ENCODE measurements at regions of chr18 and their contacts with region 1.

Region 1: DNA sequence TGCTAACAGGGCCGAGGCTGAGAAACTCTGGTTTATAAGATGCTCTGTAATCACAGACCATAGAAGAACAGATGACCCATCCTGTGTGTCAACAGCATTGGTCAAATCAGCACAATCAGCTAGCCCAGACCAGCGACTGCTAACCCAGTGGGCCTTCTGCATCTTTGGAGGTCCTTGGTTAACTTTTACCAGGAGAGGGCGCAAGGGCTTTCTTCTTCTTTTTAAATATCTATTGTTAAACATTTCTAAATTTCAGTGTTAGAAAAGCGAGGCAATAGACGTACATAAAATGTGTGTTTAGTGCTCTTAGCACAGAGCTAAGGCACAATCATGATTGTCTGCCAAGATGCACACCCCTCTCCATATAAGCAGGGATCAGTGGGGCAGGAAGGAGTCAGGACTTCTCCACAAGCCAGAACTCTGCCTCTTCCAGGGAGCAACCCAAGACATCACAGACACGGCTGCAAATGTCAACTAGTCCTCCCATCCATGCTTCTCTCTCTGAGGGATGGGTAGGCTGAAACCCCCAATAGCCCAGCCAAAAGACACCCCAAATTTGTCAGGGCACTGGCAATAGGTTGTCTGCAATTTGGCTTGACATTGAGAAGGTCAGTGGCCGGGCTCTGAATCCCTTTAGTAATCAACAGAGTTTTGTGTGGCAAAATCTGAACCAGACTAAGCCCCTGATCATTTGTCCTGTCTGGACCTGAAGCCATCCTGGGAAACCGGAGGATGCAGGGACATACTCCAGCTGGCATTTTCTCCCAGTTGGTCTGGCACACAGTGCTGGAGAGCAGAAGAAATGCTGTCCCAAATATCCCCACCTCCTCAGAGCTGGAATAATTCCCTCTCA is 188.2 kb downstream of the BCL2 start:
- DNase-seq: peak; percentile 32 to 78 (median 63)
- ATAC-seq: peak; percentile 76
- H3K4me3 ChIP-seq: no peak overlapping the region
- H3K4me3 Mint-ChIP-seq: no peak overlapping the region
- H3K27ac ChIP-seq: no peak overlapping the region
- H3K27ac Mint-ChIP-seq: peak overlapping the region; percentile 77
- H3K4me1 ChIP-seq: peaks cover 31% of the 10 kb centered on the region
- H3K4me1 Mint-ChIP-seq: peaks cover 30% of the 10 kb centered on the region
- H3K27me3 ChIP-seq: no peaks in the 10 kb centered on the region
- H3K27me3 Mint-ChIP-seq: no peaks in the 10 kb centered on the region
- CTCF ChIP-seq: peak; percentile 71

Region 2: DNA sequence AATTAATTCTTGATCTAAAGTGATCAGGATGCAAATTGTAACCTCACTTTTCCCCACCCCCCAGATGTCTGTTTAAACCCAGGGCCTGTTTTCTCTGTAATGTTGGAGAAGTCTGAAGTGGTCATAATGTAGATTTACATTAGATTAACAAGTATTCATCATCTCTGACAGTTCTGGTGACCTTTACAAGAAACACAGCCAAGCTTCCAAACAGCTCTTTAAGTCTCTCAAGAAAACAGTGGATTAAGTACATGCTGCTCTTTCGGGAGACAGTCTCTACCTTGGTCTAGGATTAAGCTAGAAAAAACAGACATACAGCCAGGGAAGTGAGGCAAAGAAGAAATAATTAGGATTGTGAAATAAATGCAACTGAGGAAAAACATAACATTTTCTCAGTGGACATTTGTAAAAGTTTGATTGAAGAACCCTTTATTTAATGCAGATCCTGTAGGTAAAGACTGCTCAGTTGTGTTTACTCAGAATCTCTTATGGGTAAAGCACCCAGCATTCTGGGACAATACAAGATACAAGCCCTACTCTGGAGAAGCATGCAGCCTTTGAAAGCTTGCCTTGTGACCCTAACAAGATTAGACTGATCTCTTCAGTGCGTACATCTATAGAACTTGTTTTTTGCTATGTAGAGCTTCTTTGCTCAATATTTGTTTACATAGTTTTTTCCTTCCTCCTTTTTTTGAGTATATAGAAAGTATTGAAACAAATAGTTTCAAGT is 212.1 kb before region 1 on chr18:
- CTCF ChIA-PET with region 1: no interaction called
- POLR2A ChIA-PET with region 1: no interaction called
- intact Hi-C with region 1: no loop called
- DNase-seq: no peak
- ATAC-seq: no peak
- H3K4me3 ChIP-seq: no peak overlapping the region
- H3K4me3 Mint-ChIP-seq: no peak overlapping the region
- H3K27ac ChIP-seq: no peak overlapping the region
- H3K27ac Mint-ChIP-seq: no peak overlapping the region
- H3K4me1 ChIP-seq: no peaks in the 10 kb centered on the region
- H3K4me1 Mint-ChIP-seq: no peaks in the 10 kb centered on the region
- H3K27me3 ChIP-seq: no peaks in the 10 kb centered on the region
- H3K27me3 Mint-ChIP-seq: no peaks in the 10 kb centered on the region
- CTCF ChIP-seq: no peak

Region 3: DNA sequence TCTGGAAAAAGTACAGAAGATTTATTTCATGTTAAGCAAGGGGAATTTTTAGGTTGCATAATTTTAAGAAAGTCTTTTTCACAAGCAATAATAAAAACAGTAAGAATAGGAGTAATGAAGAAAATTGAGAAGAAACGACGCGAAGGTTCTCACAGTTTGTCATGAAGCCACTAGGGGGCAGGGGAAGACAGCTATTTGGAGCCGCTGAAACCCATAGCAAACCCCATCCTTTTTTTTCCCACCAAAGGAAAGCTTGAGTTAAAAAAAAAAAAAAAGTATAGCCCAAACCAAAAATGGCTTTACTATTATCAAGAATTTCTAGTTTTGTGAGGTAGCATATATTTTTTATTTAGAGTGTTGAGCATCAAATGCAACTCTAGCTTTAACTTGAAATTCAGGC is 115.1 kb before region 1 on chr18:
- CTCF ChIA-PET with region 1: interaction called, 30 read pairs
- POLR2A ChIA-PET with region 1: interaction called, 3 read pairs
- intact Hi-C with region 1: loop called (anchors 1 to 2 kb)
- DNase-seq: peak; percentile 11 to 79 (median 51)
- ATAC-seq: peak; percentile 77
- H3K4me3 ChIP-seq: no peak overlapping the region
- H3K4me3 Mint-ChIP-seq: no peak overlapping the region
- H3K27ac ChIP-seq: no peak overlapping the region
- H3K27ac Mint-ChIP-seq: no peak overlapping the region
- H3K4me1 ChIP-seq: no peaks in the 10 kb centered on the region
- H3K4me1 Mint-ChIP-seq: no peaks in the 10 kb centered on the region
- H3K27me3 ChIP-seq: no peaks in the 10 kb centered on the region
- H3K27me3 Mint-ChIP-seq: peaks cover 16% of the 10 kb centered on the region
- CTCF ChIP-seq: peak; percentile 90

Region 4: GRCh38 chr18:63148449-63149301 is 17.3 kb after region 1 on chr18:
- CTCF ChIA-PET with region 1: interaction called, 88 read pairs
- POLR2A ChIA-PET with region 1: interaction called, 5 read pairs
- intact Hi-C with region 1: no loop called
- DNase-seq: no peak
- ATAC-seq: no peak
- H3K4me3 ChIP-seq: no peak overlapping the region
- H3K4me3 Mint-ChIP-seq: no peak overlapping the region
- H3K27ac ChIP-seq: no peak overlapping the region
- H3K27ac Mint-ChIP-seq: no peak overlapping the region
- H3K4me1 ChIP-seq: peaks cover 28% of the 10 kb centered on the region
- H3K4me1 Mint-ChIP-seq: peaks cover 51% of the 10 kb centered on the region
- H3K27me3 ChIP-seq: no peaks in the 10 kb centered on the region
- H3K27me3 Mint-ChIP-seq: no peaks in the 10 kb centered on the region
- CTCF ChIP-seq: no peak

Region 5: DNA sequence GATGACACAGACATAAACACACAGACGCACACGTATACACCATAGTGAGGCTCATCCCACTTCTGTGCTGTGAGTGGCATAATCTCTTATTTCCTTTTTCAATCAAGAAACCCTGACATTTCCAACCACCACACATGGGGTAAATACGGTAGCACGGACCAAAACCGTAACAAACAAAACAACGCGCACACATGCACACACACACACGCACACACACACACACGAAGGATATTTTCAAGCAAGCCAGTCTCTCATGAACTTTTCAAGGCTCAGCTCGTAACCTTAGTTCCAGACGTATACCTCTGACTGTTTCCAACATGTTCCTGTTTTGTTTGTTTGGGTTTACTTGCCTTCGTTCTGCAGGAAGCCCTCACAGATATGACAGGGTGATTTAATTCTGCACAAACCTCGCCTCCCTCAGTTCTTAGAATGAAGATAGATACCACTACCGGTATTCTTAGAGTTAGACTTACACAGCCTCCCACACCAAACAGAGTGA is 68.5 kb after region 1 on chr18:
- CTCF ChIA-PET with region 1: interaction called, 17 read pairs
- POLR2A ChIA-PET with region 1: no interaction called
- intact Hi-C with region 1: loop called in 1 of 2 experiments (anchors 1 kb)
- DNase-seq: peak in 6 of 9 experiments; percentile 35 to 70 (median 56)
- ATAC-seq: peak; percentile 67
- H3K4me3 ChIP-seq: peak overlapping the region; percentile 54 to 70
- H3K4me3 Mint-ChIP-seq: no peak overlapping the region
- H3K27ac ChIP-seq: peak overlapping the region; percentile 60 to 72
- H3K27ac Mint-ChIP-seq: no peak overlapping the region
- H3K4me1 ChIP-seq: peaks cover 68% of the 10 kb centered on the region
- H3K4me1 Mint-ChIP-seq: peaks cover 39% of the 10 kb centered on the region
- H3K27me3 ChIP-seq: no peaks in the 10 kb centered on the region
- H3K27me3 Mint-ChIP-seq: no peaks in the 10 kb centered on the region
- CTCF ChIP-seq: no peak

Region 6: GRCh38 chr18:63329431-63330145 is 198.3 kb after region 1 on chr18:
- CTCF ChIA-PET with region 1: interaction called, 22 read pairs
- POLR2A ChIA-PET with region 1: interaction called, 3 read pairs
- intact Hi-C with region 1: no loop called
- DNase-seq: no peak
- ATAC-seq: no peak
- H3K4me3 ChIP-seq: no peak overlapping the region
- H3K4me3 Mint-ChIP-seq: no peak overlapping the region
- H3K27ac ChIP-seq: no peak overlapping the region
- H3K27ac Mint-ChIP-seq: no peak overlapping the region
- H3K4me1 ChIP-seq: no peaks in the 10 kb centered on the region
- H3K4me1 Mint-ChIP-seq: no peaks in the 10 kb centered on the region
- H3K27me3 ChIP-seq: no peaks in the 10 kb centered on the region
- H3K27me3 Mint-ChIP-seq: no peaks in the 10 kb centered on the region
- CTCF ChIP-seq: no peak

Region 7: GRCh38 chr18:63339920-63340484 is 208.7 kb after region 1 on chr18:
- CTCF ChIA-PET with region 1: interaction called, 19 read pairs
- POLR2A ChIA-PET with region 1: no interaction called
- intact Hi-C with region 1: no loop called
- DNase-seq: peak in 8 of 9 experiments; percentile 10 to 75 (median 45)
- ATAC-seq: peak; percentile 67
- H3K4me3 ChIP-seq: no peak overlapping the region
- H3K4me3 Mint-ChIP-seq: no peak overlapping the region
- H3K27ac ChIP-seq: no peak overlapping the region
- H3K27ac Mint-ChIP-seq: no peak overlapping the region
- H3K4me1 ChIP-seq: no peaks in the 10 kb centered on the region
- H3K4me1 Mint-ChIP-seq: peaks cover 4% of the 10 kb centered on the region
- H3K27me3 ChIP-seq: no peaks in the 10 kb centered on the region
- H3K27me3 Mint-ChIP-seq: no peaks in the 10 kb centered on the region
- CTCF ChIP-seq: peak; percentile 75

Measured in CD8-positive, alpha-beta T cell (primary cell).